Naive thymus-derived CD8-positive, alpha-beta T cell (primary cell): ENCODE measurements at regions of chr1 and their contacts with region 1.

Region 1: DNA sequence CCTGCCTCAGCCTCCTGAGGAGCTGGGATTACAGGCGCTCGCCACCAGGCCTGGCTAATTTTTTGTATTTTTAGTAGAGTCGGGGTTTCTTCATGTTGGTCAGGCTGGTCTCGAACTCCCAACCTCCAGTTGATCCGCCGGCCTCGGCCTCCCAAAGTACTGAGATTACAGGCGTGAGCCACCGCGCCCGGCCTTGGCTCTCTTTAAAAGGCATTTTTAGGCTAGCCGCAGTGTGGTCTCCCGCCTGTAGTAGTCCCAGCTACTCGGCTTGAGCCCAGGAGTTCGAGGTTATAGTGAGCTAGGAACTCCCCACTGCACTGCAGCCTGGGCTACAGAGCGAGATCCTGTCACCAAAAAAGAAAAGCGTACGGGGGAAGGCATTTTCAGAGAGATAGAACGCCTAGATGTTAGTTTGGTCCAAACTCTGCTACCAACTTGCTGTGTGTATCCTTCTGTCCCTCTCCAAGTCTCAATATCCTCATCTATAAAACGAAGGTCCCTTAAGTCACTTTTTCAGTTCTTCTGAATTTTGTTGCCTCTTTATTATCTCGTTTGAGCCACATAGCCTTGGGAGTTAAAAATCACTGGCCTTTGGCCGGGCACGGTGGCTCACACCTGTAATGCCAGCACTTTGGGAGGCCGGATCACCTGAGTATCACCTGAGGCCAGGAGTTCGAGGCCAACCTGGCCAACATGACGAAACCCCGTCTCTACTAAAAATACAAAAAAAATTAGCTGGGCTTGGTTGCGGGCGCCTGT is 734 bp downstream of the MED18 start:
- DNase-seq: peak in 1 of 10 donors; percentile 21
- ATAC-seq: peak; percentile 9 to 14
- H3K4me3 Mint-ChIP-seq: peak overlapping the region; percentile 89 to 98 (median 94)
- H3K27ac Mint-ChIP-seq: peak overlapping the region; percentile 94 to 99 (median 98)
- H3K4me1 Mint-ChIP-seq: peaks cover 17 to 54% (median 42%) of the 10 kb centered on the region in 4 donors
- H3K27me3 Mint-ChIP-seq: peaks cover 0 to 4% (median 0%) of the 10 kb centered on the region in 5 donors

Region 2: GRCh38 chr1:28235755-28236655 is 93.6 kb before region 1 on chr1 and contains the start of gene ATP5IF1:
- POLR2A ChIA-PET with region 1: interaction called, 28 read pairs
- DNase-seq: peak; percentile 84 to 97 (median 94)
- ATAC-seq: peak; percentile 95
- H3K4me3 Mint-ChIP-seq: peak within 1 kb of the TSS in 1 of 10 donors; percentile 29
- H3K27ac Mint-ChIP-seq: no peak within 1 kb of the TSS
- H3K4me1 Mint-ChIP-seq: peaks cover 8 to 28% (median 18%) of the 10 kb centered on the region in 4 donors
- H3K27me3 Mint-ChIP-seq: no peaks in the 10 kb centered on the region
- polyA plus RNA-seq, gene ATP5IF1: 468 to 666 (median 606) TPM

Region 3: GRCh38 chr1:28259307-28260167 is 70.0 kb before region 1 on chr1 and contains the start of gene SESN2:
- POLR2A ChIA-PET with region 1: interaction called, 15 read pairs
- DNase-seq: peak; percentile 97 to 99 (median 99)
- ATAC-seq: peak; percentile 95 to 97
- H3K4me3 Mint-ChIP-seq: peak within 1 kb of the TSS; percentile 75 to 90 (median 80)
- H3K27ac Mint-ChIP-seq: peak within 1 kb of the TSS; percentile 57 to 89 (median 82)
- H3K4me1 Mint-ChIP-seq: peaks cover 19 to 54% (median 39%) of the 10 kb centered on the region in 4 donors
- H3K27me3 Mint-ChIP-seq: peaks cover 0 to 4% (median 0%) of the 10 kb centered on the region in 5 donors
- polyA plus RNA-seq, gene SESN2: 1.6 to 8.2 (median 4.7) TPM

Region 4: GRCh38 chr1:28369371-28370238 is 40.0 kb after region 1 on chr1 and contains the start of gene PHACTR4:
- POLR2A ChIA-PET with region 1: interaction called, 14 read pairs
- DNase-seq: peak; percentile 62 to 86 (median 69)
- ATAC-seq: peak; percentile 89 to 91
- H3K4me3 Mint-ChIP-seq: peak within 1 kb of the TSS; percentile 90 to 98 (median 95)
- H3K27ac Mint-ChIP-seq: peak within 1 kb of the TSS; percentile 83 to 98 (median 95)
- H3K4me1 Mint-ChIP-seq: peaks cover 8 to 40% (median 37%) of the 10 kb centered on the region in 4 donors
- H3K27me3 Mint-ChIP-seq: no peaks in the 10 kb centered on the region
- polyA plus RNA-seq, gene PHACTR4: 5.4 to 20.2 (median 6.0) TPM

Region 5: DNA sequence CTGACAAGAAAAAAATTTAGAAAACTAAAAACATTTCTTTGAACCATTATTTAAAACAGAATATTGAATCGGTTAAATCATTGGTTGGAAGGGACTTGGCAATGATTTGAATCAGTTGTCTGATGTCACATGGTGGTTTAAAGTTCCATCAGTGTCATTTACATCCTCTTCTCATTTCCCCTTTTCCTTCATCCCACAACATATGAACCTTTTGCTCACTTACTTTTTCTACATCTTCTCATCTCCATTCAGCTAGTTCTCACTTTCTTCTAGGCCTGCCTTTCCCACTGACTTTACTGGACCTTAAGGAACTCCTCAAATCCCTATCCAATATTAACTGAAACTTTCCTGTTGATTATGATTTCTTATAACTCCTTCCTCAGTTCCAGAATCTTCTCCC is 98.4 kb after region 1 on chr1:
- POLR2A ChIA-PET with region 1: no interaction called
- DNase-seq: no peak
- ATAC-seq: no peak
- H3K4me3 Mint-ChIP-seq: no peak overlapping the region
- H3K27ac Mint-ChIP-seq: peak overlapping the region in 1 of 10 donors; percentile 31
- H3K4me1 Mint-ChIP-seq: peaks cover 0 to 8% (median 4%) of the 10 kb centered on the region in 4 donors
- H3K27me3 Mint-ChIP-seq: no peaks in the 10 kb centered on the region

Region 6: GRCh38 chr1:28631713-28632112 is 302.1 kb after region 1 on chr1:
- POLR2A ChIA-PET with region 1: no interaction called
- DNase-seq: no peak
- ATAC-seq: no peak
- H3K4me3 Mint-ChIP-seq: no peak overlapping the region
- H3K27ac Mint-ChIP-seq: peak overlapping the region in 1 of 10 donors; percentile 45
- H3K4me1 Mint-ChIP-seq: peaks cover 5 to 17% (median 11%) of the 10 kb centered on the region in 4 donors
- H3K27me3 Mint-ChIP-seq: no peaks in the 10 kb centered on the region

Region 7: GRCh38 chr1:28642847-28643635 is 313.5 kb after region 1 on chr1 and contains the start of gene TAF12:
- POLR2A ChIA-PET with region 1: interaction called, 13 read pairs
- DNase-seq: peak; percentile 78 to 95 (median 90)
- ATAC-seq: peak; percentile 85 to 86
- H3K4me3 Mint-ChIP-seq: peak within 1 kb of the TSS; percentile 96 to 100 (median 99)
- H3K27ac Mint-ChIP-seq: peak within 1 kb of the TSS; percentile 96 to 99 (median 98)
- H3K4me1 Mint-ChIP-seq: peaks cover 24 to 71% (median 57%) of the 10 kb centered on the region in 4 donors
- H3K27me3 Mint-ChIP-seq: no peaks in the 10 kb centered on the region
- polyA plus RNA-seq, gene TAF12: 42.4 to 50.1 (median 47.3) TPM